ENCODE measurements at regions of chr19 and their contacts with region 1.

Region 1: GRCh38 chr19:8654591-8655339 is 24.3 kb downstream of the NFILZ start:
- DNase-seq: peak; percentile 48
- ATAC-seq: peak; percentile 89
- H3K4me3 ChIP-seq: peak overlapping the region; percentile 15 to 38; a peak in 3 of 4 replicates
- H3K27ac ChIP-seq: no peak overlapping the region
- H3K4me1 ChIP-seq: peaks cover 0 to 7% of the 10 kb centered on the region in 2 experiments; a peak in 1 of 4 replicates
- H3K27me3 ChIP-seq: no peaks in the 10 kb centered on the region
- CTCF ChIP-seq: peak; percentile 75 to 91 (median 78); a peak in 5 of 6 replicates
- POLR2A ChIP-seq: no peak
- RAD21 ChIP-seq: peak; percentile 87

Region 2: GRCh38 chr19:8641908-8642547 is 12.7 kb before region 1 on chr19:
- CTCF ChIA-PET with region 1: interaction called, 13 read pairs
- POLR2A ChIA-PET with region 1: interaction called, 3 read pairs
- RAD21 ChIA-PET with region 1: interaction called in 1 of 2 experiments, 3 read pairs
- intact Hi-C with region 1: no loop called
- DNase-seq: peak; percentile 51
- ATAC-seq: peak; percentile 84
- H3K4me3 ChIP-seq: no peak overlapping the region
- H3K27ac ChIP-seq: no peak overlapping the region
- H3K4me1 ChIP-seq: no peaks in the 10 kb centered on the region
- H3K27me3 ChIP-seq: no peaks in the 10 kb centered on the region
- CTCF ChIP-seq: peak; percentile 68 to 76 (median 70); a peak in 5 of 6 replicates
- POLR2A ChIP-seq: no peak
- RAD21 ChIP-seq: peak; percentile 63

Region 3: GRCh38 chr19:8697671-8698432 is 43.1 kb after region 1 on chr19:
- CTCF ChIA-PET with region 1: interaction called, 29 read pairs
- POLR2A ChIA-PET with region 1: no interaction called
- RAD21 ChIA-PET with region 1: interaction called in 1 of 2 experiments, 4 read pairs
- intact Hi-C with region 1: loop called (anchors 1 kb)
- DNase-seq: no peak
- ATAC-seq: peak; percentile 45; the same call in 1 of the 2 replicates
- H3K4me3 ChIP-seq: no peak overlapping the region
- H3K27ac ChIP-seq: no peak overlapping the region
- H3K4me1 ChIP-seq: no peaks in the 10 kb centered on the region; a peak in 1 of 4 replicates
- H3K27me3 ChIP-seq: 0 out of 2 replicates have a peak, but pooled peaks cover 6% of the 10 kb centered on the region
- CTCF ChIP-seq: peak in 2 of 3 experiments; percentile 50 to 58; a peak in 5 of 6 replicates
- POLR2A ChIP-seq: no peak
- RAD21 ChIP-seq: peak; percentile 49

Measured in HCT116 (cell line).